Activated CD4-positive, alpha-beta T cell treated with anti-CD3 and anti-CD28 coated beads, Interleukin-2, amount 10 ng/mL, durations not matched to agents 24 days and 14 days (primary cell): ENCODE measurements at regions of chr11 and their contacts with region 1.

Region 1: GRCh38 chr11:19553683-19554333 is 158.8 kb upstream of the NAV2 start:
- DNase-seq: peak; percentile 89
- H3K4me3 Mint-ChIP-seq: no peak overlapping the region
- H3K27ac Mint-ChIP-seq: no peak overlapping the region
- H3K4me1 Mint-ChIP-seq: no peaks in the 10 kb centered on the region
- H3K27me3 Mint-ChIP-seq: no peaks in the 10 kb centered on the region

Region 2: DNA sequence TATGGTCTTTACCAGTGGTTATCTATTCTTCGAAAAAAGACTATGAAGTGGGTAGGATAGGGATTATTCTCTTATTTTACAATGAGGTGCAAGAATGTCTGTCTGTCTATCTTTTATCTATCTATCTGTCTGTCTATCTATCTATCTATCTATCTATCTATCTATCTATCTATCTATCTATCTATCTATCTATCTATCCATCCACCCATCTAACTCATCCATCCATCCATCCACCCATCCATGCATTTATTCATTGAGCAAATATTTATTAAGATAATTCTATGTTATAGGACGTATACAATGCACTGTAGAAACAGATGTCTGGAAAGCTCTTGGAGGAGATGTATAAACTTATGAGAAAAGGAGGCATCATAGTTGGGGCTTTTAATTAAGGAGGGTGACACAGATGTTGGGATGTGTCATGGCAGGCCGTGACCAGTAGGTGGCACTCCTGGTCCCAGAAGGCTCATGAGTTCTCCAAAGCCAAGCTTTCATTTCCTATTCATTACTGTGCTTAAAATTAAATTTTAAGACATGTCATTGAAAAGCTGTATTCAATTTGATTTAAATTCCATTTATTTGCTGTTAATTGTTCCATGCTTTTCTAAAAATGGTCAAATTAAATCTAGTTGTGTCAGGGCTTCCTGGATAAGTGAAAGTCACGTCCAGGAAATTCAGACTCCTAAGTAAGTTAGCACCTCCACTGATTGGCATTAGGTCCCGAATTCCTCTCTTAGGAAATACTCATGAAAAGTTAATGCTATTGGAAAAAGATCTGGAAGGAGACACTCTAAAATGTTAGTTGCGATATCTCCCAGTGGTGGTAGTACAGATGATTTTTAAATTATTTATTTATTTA is 294.1 kb before region 1 on chr11:
- intact Hi-C with region 1: loop called (anchors 1 kb)
- DNase-seq: peak; percentile 89
- H3K4me3 Mint-ChIP-seq: no peak overlapping the region
- H3K27ac Mint-ChIP-seq: no peak overlapping the region
- H3K4me1 Mint-ChIP-seq: no peaks in the 10 kb centered on the region
- H3K27me3 Mint-ChIP-seq: peaks cover 8% of the 10 kb centered on the region

Region 3: DNA sequence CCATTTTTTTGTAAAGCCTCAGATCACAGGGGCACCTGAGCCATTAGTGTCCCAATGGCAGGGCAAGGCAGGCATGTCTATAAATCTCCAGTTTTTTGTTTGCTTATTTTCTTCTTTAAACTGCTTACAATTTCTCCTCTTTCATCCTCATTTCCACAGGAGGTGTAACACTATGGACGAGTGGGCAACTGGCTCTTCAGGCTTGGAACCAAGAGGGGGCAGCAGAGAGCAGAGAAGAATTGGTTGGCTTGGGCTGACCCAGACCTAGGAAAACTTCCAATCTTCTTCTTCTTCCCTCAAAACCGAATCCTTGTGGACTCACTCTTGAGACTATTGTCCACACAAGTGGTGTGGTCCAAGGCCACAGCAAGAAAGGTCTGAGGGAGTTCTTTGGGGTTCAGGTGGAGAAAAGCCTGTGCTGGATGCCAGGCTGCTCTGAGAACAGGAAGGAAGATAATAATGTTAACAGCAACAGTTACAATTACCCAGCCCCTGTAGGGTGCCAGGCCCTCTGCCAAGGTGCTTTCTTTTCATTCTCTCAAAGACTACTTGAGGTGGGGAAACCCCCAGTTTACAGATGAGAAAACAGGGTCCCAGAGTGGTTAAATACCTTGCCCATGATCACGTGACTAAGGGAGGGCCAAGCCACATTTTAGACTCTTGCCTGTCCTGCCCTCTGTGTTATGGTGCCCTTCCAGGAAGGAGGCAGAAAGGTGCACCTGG is 242.3 kb before region 1 on chr11:
- intact Hi-C with region 1: loop called (anchors 1 kb)
- DNase-seq: peak; percentile 84
- H3K4me3 Mint-ChIP-seq: no peak overlapping the region
- H3K27ac Mint-ChIP-seq: no peak overlapping the region
- H3K4me1 Mint-ChIP-seq: no peaks in the 10 kb centered on the region
- H3K27me3 Mint-ChIP-seq: no peaks in the 10 kb centered on the region

Region 4: DNA sequence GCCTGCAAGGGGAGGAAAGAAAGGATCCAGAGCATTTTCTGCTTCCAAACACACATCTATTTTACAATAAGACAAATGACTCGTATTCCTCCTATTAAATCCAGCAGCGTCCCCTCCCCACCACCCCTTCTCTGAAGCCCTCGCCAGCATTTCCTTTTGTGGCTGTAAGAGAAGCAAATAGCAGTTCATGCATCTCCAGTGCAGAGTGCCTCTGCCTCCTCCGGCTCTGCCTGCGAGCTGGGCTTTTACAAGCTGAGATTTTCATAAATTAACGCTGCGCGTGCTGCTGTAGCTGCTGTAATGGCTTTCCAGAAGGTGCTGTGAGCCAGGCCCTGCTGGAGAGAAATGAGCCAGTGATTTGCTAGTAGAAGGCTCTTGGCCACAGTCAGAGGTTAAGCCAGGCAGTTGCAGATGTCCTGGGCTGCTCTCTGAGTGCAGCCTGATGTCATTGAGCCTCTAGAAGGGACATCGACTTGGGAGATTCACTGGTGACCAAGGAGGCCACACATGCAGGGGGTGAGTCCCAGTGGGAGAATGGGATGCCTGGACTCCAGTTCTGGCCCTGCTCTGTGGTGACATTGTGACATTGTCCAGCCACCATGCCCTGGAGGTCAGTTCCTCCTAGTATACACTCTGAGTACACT is 24.3 kb after region 1 on chr11:
- intact Hi-C with region 1: no loop called
- DNase-seq: no peak
- H3K4me3 Mint-ChIP-seq: no peak overlapping the region
- H3K27ac Mint-ChIP-seq: no peak overlapping the region
- H3K4me1 Mint-ChIP-seq: no peaks in the 10 kb centered on the region
- H3K27me3 Mint-ChIP-seq: no peaks in the 10 kb centered on the region

Region 5: GRCh38 chr11:19890308-19890707 is 336.5 kb after region 1 on chr11:
- intact Hi-C with region 1: no loop called
- DNase-seq: no peak
- H3K4me3 Mint-ChIP-seq: no peak overlapping the region
- H3K27ac Mint-ChIP-seq: no peak overlapping the region
- H3K4me1 Mint-ChIP-seq: no peaks in the 10 kb centered on the region
- H3K27me3 Mint-ChIP-seq: peaks cover 1% of the 10 kb centered on the region